Activated B cell treated with CpG ODN at 0.5 μM for 24 hours (primary cell): ENCODE measurements at regions of chr20 and their contacts with region 1.

Region 1: DNA sequence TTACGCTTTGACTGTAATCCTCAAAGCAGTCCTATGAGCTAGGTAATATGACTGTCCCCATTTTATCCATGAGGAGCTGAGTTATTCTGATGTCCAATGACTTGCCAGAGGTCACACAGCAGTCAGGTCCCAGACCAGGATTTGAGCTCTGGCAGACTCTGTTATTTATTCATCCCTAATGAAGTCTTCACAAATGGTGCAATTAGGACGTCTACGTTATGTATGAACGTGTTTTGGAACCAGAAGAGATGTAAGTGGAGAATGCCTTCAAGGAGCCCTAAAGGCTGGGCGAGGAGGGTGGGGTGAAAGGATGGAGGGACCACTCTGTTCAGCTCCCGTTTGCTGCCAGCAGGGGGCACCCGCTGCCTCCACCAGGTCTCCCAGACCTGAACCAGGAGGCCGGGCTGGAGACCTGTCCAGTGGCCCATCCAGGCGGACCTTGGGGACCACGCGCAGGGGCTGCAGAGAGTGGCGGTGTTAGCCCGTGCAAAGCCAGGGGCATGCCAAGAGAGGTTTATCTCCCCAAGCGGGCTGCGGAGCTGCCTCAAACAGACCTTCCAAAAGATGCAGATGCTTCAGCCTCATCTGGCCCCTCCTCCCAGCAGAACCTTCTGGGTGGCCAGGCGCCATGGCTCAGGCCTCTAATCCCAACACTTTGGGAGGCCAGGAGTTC is 15.2 kb upstream of the ZNF335 start:
- DNase-seq: peak; percentile 70
- ATAC-seq: peak; percentile 97
- H3K4me3 Mint-ChIP-seq: no peak overlapping the region
- H3K27ac Mint-ChIP-seq: no peak overlapping the region
- H3K4me1 Mint-ChIP-seq: peaks cover 5% of the 10 kb centered on the region
- H3K27me3 Mint-ChIP-seq: peaks cover 13% of the 10 kb centered on the region
- CTCF ChIP-seq: no peak

Region 2: GRCh38 chr20:45998761-45999160 is 11.5 kb after region 1 on chr20:
- CTCF ChIA-PET with region 1: interaction called, 23 read pairs
- POLR2A ChIA-PET with region 1: no interaction called
- intact Hi-C with region 1: no loop called
- DNase-seq: no peak
- ATAC-seq: peak; percentile 87
- H3K4me3 Mint-ChIP-seq: no peak overlapping the region
- H3K27ac Mint-ChIP-seq: no peak overlapping the region
- H3K4me1 Mint-ChIP-seq: peaks cover 33% of the 10 kb centered on the region
- H3K27me3 Mint-ChIP-seq: peaks cover 13% of the 10 kb centered on the region
- CTCF ChIP-seq: no peak